HEK293 (cell line): ENCODE measurements at regions of chr12 and their contacts with region 1.

Region 1: DNA sequence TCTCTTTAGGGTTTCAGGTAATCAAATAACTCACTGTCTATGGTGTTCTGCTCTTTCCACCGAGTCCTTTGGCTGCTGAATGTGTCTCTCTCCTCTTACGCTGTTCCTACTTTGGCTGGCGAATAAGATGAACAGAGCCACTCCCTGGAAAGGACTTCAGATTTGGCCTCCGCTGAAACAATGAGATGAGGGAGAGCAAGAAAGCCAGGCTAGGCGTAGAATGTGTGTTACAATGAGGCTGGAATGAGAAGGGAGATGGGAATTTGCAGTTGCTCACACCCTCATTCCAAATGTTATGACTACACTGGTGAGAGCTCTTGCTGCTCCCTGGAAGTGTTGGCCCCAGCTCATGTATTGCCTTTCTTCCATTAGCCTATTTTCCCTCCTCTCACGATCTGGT is at the start of gene MFAP5:
- H3K4me3 ChIP-seq: no peak within 1 kb of the TSS
- H3K27ac ChIP-seq: no peak within 1 kb of the TSS
- H3K4me1 ChIP-seq: no peaks in the 10 kb centered on the region
- CTCF ChIP-seq: no peak

Region 2: GRCh38 chr12:8637666-8638065 is 24.9 kb before region 1 on chr12:
- CTCF ChIA-PET with region 1: no interaction called
- POLR2A ChIA-PET with region 1: no interaction called
- H3K4me3 ChIP-seq: no peak overlapping the region
- H3K27ac ChIP-seq: no peak overlapping the region
- H3K4me1 ChIP-seq: no peaks in the 10 kb centered on the region
- CTCF ChIP-seq: no peak

Region 3: GRCh38 chr12:8648576-8649205 is 13.9 kb before region 1 on chr12:
- CTCF ChIA-PET with region 1: interaction called, 11 read pairs
- POLR2A ChIA-PET with region 1: no interaction called
- H3K4me3 ChIP-seq: no peak overlapping the region
- H3K27ac ChIP-seq: no peak overlapping the region
- H3K4me1 ChIP-seq: no peaks in the 10 kb centered on the region
- CTCF ChIP-seq: no peak

Region 4: DNA sequence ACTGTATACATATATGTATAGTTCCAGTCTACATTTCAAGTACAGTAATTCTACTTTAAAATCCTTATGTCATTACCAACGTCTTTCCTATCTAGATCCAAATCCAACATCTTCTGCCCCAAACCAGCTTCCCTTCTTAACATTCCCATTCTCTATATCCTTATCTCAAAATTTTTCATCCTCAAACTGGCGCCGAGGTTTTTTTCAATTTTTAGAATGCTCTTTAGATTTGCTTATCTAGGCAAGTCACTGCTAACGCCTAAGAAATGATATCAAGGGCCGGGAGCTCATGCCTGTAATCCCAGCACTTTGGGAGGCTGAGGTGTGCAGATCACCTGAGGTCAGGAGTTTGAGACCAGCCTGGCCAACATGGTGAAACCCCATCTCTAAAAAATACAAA is 83.5 kb after region 1 on chr12:
- CTCF ChIA-PET with region 1: no interaction called
- POLR2A ChIA-PET with region 1: no interaction called
- H3K4me3 ChIP-seq: no peak overlapping the region
- H3K27ac ChIP-seq: no peak overlapping the region
- H3K4me1 ChIP-seq: no peaks in the 10 kb centered on the region
- CTCF ChIP-seq: no peak

Region 5: DNA sequence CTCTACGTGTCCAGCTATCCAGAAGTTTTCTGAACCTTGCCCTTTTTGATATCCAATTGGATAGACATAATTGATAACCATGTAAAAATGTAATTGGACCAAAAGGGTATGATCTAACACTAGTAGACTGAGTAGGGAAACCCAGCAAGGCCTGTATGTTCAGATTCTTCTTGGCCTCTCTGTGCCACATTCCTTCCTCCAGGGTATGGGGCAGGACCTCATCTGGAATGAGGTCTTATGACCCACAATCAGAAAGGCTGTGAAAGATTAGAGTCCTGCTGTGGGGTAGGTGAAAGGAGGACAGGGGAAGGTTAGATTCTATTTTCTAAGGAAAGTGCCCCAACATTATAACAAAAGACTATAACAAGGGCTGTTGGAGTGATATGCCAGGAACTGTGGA is 108.5 kb after region 1 on chr12:
- CTCF ChIA-PET with region 1: no interaction called
- POLR2A ChIA-PET with region 1: no interaction called
- H3K4me3 ChIP-seq: no peak overlapping the region
- H3K27ac ChIP-seq: no peak overlapping the region
- H3K4me1 ChIP-seq: no peaks in the 10 kb centered on the region
- CTCF ChIP-seq: no peak

Region 6: DNA sequence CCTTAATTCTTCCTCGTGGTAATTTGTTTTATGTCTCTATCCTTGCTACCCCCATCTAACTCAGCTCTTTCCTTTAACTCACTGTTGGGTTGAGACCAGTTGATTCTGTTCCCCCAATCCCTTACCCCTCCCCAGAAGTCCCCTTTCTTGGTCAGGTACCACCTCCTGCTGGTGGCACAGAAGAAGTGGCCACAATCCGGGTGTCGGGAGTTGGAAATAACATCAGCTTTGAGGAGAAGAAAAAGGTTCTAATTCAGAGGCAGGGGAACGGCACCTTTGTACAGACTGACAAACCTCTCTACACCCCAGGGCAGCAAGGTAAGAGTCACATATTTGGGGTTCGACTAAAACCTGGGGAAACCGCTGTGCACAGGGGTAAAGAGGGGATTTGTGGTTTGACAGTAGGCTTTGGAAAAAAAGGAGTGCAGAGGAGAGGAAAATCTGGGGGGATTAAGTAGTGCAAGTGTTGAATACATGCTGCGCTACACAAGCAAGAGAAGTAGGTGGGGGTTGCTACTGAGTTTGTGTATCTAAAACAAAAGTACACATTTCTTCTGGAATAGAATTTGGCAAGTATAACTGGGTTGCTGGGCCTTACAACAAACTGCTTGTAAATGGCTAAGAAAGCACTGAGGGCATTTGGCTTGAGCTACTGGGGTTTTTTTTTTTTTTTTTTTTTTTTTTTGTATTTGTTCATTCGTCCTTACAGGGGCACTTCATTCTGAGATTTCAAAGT is 161.1 kb after region 1 on chr12:
- CTCF ChIA-PET with region 1: interaction called, 26 read pairs
- POLR2A ChIA-PET with region 1: no interaction called
- H3K4me3 ChIP-seq: no peak overlapping the region
- H3K27ac ChIP-seq: no peak overlapping the region
- H3K4me1 ChIP-seq: no peaks in the 10 kb centered on the region
- CTCF ChIP-seq: no peak; the same call in 1 of the 2 replicates

Region 7: DNA sequence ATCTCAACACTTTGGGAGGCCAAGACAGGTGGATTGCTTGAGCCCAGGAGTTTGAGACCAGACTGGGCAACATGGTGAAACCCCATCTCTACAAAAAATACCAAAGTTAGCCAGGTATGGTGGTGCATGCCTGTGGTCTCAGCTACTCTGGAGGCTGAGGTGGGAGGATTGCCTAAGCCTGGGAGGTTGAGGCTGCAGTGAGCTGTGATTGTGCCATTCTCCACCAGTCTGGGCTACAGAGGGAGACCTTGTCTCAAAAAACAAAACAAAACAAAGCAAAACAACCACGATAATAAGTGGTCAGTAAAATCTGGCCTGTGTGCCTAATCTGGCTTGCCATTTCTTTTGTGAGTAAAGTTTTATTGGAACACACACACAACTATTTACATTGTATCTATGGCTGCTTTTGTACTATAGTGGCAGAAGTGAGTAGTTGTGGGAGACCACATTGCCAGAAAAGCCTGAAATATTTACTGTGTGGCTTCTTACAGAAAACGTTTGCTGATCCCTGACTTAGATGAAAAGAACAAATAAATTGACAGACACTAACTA is 307.3 kb after region 1 on chr12:
- CTCF ChIA-PET with region 1: no interaction called
- POLR2A ChIA-PET with region 1: no interaction called
- H3K4me3 ChIP-seq: no peak overlapping the region
- H3K27ac ChIP-seq: no peak overlapping the region
- H3K4me1 ChIP-seq: no peaks in the 10 kb centered on the region
- CTCF ChIP-seq: no peak

Region 8: DNA sequence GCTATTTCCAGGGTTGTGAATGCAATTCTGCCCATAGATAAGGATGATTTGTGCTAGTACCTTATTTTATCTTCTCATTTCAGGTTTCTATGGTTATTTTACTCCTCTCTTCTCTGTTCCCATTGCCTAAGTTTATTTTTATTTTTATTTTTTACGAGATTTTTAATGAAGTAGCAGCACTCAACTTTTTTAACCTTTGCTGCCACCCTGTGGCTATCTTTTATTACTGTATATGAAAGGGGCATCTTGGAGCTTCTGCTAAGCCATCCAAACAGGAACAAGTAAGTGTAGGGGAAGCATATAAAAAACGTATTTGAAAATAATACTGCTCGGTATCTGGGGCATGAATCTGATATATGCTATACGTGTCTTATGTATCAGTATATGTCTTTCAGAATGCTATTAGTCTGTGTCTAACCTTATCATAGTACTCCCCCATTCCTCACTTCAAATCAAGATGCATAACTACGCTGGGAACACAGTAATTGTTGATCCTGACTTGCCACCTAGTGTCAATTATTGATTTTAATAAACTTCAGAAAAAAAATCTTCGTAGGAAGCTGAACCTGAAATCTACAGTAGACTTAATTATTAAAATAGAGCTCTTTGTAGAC is 387.0 kb after region 1 on chr12:
- CTCF ChIA-PET with region 1: interaction called, 20 read pairs
- POLR2A ChIA-PET with region 1: no interaction called
- H3K4me3 ChIP-seq: no peak overlapping the region
- H3K27ac ChIP-seq: no peak overlapping the region
- H3K4me1 ChIP-seq: no peaks in the 10 kb centered on the region
- CTCF ChIP-seq: no peak